Endothelial cell of umbilical vein (primary cell): ENCODE measurements at regions of chr13 and their contacts with region 1.

Region 1: GRCh38 chr13:107205303-107206104 is 637.6 kb upstream of the ARGLU1 start:
- DNase-seq: peak; percentile 71
- H3K4me3 ChIP-seq: no peak overlapping the region
- H3K27ac ChIP-seq: no peak overlapping the region
- H3K4me1 ChIP-seq: peaks cover 24% of the 10 kb centered on the region
- H3K27me3 ChIP-seq: no peaks in the 10 kb centered on the region
- CTCF ChIP-seq: peak; percentile 90 to 97
- POLR2A ChIP-seq: no peak

Region 2: GRCh38 chr13:105918842-105919741 is 1286.4 kb before region 1 on chr13:
- CTCF ChIA-PET with region 1: no interaction called
- POLR2A ChIA-PET with region 1: no interaction called
- dilution Hi-C with region 1: no loop called
- intact Hi-C with region 1: no loop called
- DNase-seq: peak; percentile 42
- H3K4me3 ChIP-seq: no peak overlapping the region
- H3K27ac ChIP-seq: no peak overlapping the region
- H3K4me1 ChIP-seq: peaks cover 15% of the 10 kb centered on the region
- H3K27me3 ChIP-seq: no peaks in the 10 kb centered on the region
- CTCF ChIP-seq: no peak
- POLR2A ChIP-seq: no peak

Region 3: GRCh38 chr13:106633321-106633720 is 572.2 kb before region 1 on chr13:
- CTCF ChIA-PET with region 1: no interaction called
- POLR2A ChIA-PET with region 1: no interaction called
- dilution Hi-C with region 1: no loop called
- intact Hi-C with region 1: no loop called
- DNase-seq: no peak
- H3K4me3 ChIP-seq: no peak overlapping the region
- H3K27ac ChIP-seq: no peak overlapping the region
- H3K4me1 ChIP-seq: no peaks in the 10 kb centered on the region
- H3K27me3 ChIP-seq: peaks cover 0 to 4% of the 10 kb centered on the region in 2 experiments
- CTCF ChIP-seq: no peak
- POLR2A ChIP-seq: no peak

Region 4: GRCh38 chr13:107117327-107118012 is 88.0 kb before region 1 on chr13:
- CTCF ChIA-PET with region 1: no interaction called
- POLR2A ChIA-PET with region 1: no interaction called
- dilution Hi-C with region 1: no loop called
- intact Hi-C with region 1: no loop called
- DNase-seq: no peak
- H3K4me3 ChIP-seq: no peak overlapping the region
- H3K27ac ChIP-seq: no peak overlapping the region
- H3K4me1 ChIP-seq: no peaks in the 10 kb centered on the region
- H3K27me3 ChIP-seq: peaks cover 0 to 3% of the 10 kb centered on the region in 2 experiments
- CTCF ChIP-seq: no peak
- POLR2A ChIP-seq: no peak

Region 5: GRCh38 chr13:107217251-107217650 is 11.7 kb after region 1 on chr13:
- CTCF ChIA-PET with region 1: interaction called, 16 read pairs
- POLR2A ChIA-PET with region 1: no interaction called
- dilution Hi-C with region 1: no loop called
- intact Hi-C with region 1: no loop called
- DNase-seq: no peak
- H3K4me3 ChIP-seq: no peak overlapping the region
- H3K27ac ChIP-seq: no peak overlapping the region
- H3K4me1 ChIP-seq: no peaks in the 10 kb centered on the region
- H3K27me3 ChIP-seq: no peaks in the 10 kb centered on the region
- CTCF ChIP-seq: no peak
- POLR2A ChIP-seq: no peak

Region 6: DNA sequence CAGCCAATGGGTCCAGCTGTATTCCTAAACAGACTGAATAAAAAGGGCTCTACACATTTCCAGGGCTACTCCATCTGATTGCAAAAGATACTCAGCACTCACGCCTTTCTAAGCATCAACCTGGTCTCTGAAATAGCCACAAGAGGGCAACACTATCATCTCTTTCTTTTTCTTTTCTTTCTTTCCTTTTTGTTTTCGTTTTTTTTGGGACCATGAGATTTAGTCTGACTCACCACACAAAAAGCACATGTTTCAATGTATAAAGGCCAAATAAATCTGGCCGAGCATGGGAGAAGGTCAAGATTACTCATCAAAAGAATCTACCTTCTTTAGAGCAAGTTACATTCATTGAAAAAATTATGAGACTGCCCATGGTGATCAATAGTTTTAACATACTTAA is 168.0 kb after region 1 on chr13:
- CTCF ChIA-PET with region 1: interaction called, 18 read pairs
- POLR2A ChIA-PET with region 1: no interaction called
- dilution Hi-C with region 1: no loop called
- intact Hi-C with region 1: loop called (anchors 1 kb)
- DNase-seq: peak; percentile 91
- H3K4me3 ChIP-seq: no peak overlapping the region
- H3K27ac ChIP-seq: no peak overlapping the region
- H3K4me1 ChIP-seq: peaks cover 36% of the 10 kb centered on the region
- H3K27me3 ChIP-seq: no peaks in the 10 kb centered on the region
- CTCF ChIP-seq: peak; percentile 59 to 63
- POLR2A ChIP-seq: no peak

Region 7: DNA sequence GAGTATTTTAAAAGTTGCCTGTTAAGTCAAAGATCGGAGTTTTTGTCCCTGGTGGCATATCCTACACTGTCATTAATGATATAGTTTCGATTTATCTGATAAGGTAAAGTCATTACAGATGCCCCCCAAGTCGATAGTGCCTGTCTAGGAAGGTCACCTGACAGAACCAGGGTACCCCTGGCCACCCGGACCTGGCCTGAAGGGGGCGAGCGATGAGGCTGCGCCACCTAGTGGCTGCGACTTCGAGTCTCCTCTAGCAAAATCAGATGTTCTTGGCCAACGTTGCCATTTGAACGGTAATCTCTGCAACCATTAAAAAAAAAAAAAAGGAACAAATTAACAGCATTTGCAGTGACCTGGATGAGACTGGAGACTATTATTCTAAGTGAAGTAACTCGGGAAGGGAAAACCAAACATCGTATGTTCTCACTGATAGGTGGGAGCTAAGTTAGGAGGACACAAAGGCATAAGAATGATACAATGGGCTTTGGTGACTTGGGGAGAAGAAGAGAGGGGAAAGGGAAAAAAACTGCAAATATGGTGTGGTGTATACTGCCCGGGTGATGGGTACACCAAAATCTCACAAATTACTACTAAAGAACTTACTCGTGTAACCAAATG is 444.7 kb after region 1 on chr13:
- CTCF ChIA-PET with region 1: interaction called, 38 read pairs
- POLR2A ChIA-PET with region 1: no interaction called
- dilution Hi-C with region 1: no loop called
- intact Hi-C with region 1: loop called (anchors 1 kb)
- DNase-seq: peak; percentile 78
- H3K4me3 ChIP-seq: no peak overlapping the region
- H3K27ac ChIP-seq: no peak overlapping the region
- H3K4me1 ChIP-seq: peaks cover 4% of the 10 kb centered on the region
- H3K27me3 ChIP-seq: no peaks in the 10 kb centered on the region
- CTCF ChIP-seq: peak; percentile 82 to 93
- POLR2A ChIP-seq: no peak

Region 8: GRCh38 chr13:108020027-108020426 is 814.5 kb after region 1 on chr13:
- CTCF ChIA-PET with region 1: no interaction called
- POLR2A ChIA-PET with region 1: no interaction called
- dilution Hi-C with region 1: no loop called
- intact Hi-C with region 1: no loop called
- DNase-seq: no peak
- H3K4me3 ChIP-seq: no peak overlapping the region
- H3K27ac ChIP-seq: no peak overlapping the region
- H3K4me1 ChIP-seq: no peaks in the 10 kb centered on the region
- H3K27me3 ChIP-seq: no peaks in the 10 kb centered on the region
- CTCF ChIP-seq: no peak
- POLR2A ChIP-seq: no peak

Region 9: DNA sequence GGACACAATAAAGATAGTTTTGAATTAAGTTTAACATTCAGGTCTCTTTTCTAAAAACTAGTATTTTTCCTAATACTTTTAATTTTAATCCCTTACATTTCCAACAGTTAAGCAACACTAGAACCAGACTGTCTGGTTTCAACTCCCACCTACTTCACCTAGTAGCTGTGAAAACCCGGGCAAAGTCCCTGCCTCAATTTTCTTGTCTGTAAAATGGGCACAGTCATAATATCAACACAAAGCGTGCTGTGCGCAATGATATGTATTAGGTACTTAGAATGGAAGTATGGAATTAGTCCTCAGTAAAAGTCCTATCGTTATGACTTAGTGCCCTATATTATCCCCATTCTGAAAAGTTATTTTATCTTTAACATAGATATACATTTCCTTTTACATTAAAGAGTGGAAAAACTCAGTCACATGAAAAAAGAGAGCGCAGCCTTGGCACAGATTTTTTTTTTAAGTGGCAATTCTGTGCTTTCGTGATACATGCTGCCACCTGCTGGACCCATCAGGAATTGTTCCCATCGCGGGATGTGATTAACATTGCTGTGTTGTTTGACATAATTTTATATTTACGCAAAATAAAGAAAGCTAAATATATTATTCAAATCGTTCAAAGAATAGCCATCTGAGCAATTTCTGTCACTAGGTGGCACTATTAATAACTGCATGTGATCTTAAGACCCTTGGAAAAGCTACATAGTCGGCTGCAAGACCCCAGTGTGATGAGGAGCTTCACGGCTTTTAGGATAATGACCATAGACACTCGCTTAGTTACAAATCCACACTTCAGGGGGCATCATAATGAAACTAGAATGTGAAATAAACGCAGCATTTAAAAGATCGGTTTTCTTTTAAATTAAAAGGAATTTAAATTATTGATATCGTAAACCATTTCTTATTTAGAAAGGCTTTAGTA is 949.9 kb after region 1 on chr13:
- CTCF ChIA-PET with region 1: interaction called, 48 read pairs
- POLR2A ChIA-PET with region 1: no interaction called
- dilution Hi-C with region 1: no loop called
- intact Hi-C with region 1: loop called (anchors 1 kb)
- DNase-seq: peak; percentile 60
- H3K4me3 ChIP-seq: no peak overlapping the region
- H3K27ac ChIP-seq: no peak overlapping the region
- H3K4me1 ChIP-seq: no peaks in the 10 kb centered on the region
- H3K27me3 ChIP-seq: no peaks in the 10 kb centered on the region
- CTCF ChIP-seq: peak; percentile 72 to 79
- POLR2A ChIP-seq: no peak